ENCODE measurements at regions of chr11 and their contacts with region 1.

Region 1: DNA sequence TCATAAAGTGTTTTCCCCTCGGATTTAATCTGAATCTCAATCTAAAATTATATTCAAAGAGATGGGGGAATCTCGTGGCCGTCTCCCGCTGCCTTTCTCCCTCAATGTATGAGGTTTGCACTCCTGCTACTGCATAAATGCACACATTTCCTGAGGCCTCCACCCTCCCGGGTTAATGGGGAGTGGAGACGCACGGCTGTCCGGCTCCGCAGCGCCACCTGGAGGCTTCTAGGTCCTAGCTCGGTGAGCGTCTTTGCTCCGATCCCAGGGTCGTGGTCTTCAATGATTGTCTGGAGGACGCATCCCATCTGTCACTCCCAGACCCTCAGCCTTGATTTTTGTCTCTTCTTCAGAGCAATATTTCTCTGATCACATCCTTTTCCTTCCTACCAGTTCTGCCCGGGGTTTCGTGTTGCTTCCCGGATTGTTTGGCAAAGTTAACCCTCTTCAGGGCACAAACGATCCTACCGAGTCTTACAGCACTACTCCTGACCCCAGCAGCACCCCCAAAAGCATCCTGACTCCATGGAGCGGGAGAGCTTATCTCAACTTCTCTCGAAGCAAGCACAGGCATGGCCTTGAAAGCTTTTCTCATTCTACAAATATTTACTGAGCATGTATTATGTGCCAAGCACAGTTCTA is at the start of gene LMO1:
- DNase-seq: peak; percentile 58
- H3K4me3 Mint-ChIP-seq: peak within 1 kb of the TSS; percentile 73
- H3K27ac Mint-ChIP-seq: peak within 1 kb of the TSS; percentile 24
- H3K4me1 Mint-ChIP-seq: peaks cover 9% of the 10 kb centered on the region
- H3K27me3 Mint-ChIP-seq: peaks cover 61% of the 10 kb centered on the region
- total RNA-seq, gene LMO1: not detected in 2 replicates

Region 2: DNA sequence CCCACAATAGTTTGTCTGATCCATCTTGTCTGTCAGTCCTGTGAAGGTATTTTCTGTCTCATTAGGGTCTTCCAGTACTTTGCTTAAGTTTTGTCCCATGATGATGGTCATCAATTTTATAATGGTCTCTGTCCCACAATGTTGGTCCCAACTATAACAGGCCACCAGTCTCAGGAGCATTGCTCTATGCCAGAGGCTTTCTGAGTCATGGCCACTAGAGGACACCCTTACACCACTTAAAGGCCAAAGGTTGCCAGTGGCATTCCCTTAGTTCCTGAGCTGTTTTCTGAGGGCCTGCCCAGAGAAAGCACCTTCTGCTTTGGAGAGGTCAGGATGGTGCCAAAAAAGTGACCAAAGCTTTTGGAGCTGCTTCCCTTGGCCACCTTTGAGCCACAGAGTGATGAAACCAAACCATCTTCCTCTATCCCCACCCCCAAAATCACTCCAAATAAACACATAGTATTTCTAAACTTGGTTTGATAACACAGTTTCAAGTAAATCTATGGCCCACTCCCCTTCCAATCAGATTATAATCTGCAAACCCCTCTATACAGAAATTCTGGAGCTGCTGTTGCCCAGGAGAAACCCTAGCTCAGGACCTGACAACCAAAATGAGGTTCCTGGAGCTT is 257.4 kb before region 1 on chr11:
- intact Hi-C with region 1: loop called (anchors 5 kb)
- DNase-seq: peak; percentile 14
- H3K4me3 Mint-ChIP-seq: no peak overlapping the region
- H3K27ac Mint-ChIP-seq: no peak overlapping the region
- H3K4me1 Mint-ChIP-seq: no peaks in the 10 kb centered on the region
- H3K27me3 Mint-ChIP-seq: no peaks in the 10 kb centered on the region

Region 3: GRCh38 chr11:8033305-8034105 is 230.4 kb before region 1 on chr11:
- intact Hi-C with region 1: no loop called
- DNase-seq: peak; percentile 28
- H3K4me3 Mint-ChIP-seq: no peak overlapping the region
- H3K27ac Mint-ChIP-seq: no peak overlapping the region
- H3K4me1 Mint-ChIP-seq: no peaks in the 10 kb centered on the region
- H3K27me3 Mint-ChIP-seq: peaks cover 22% of the 10 kb centered on the region

Region 4: DNA sequence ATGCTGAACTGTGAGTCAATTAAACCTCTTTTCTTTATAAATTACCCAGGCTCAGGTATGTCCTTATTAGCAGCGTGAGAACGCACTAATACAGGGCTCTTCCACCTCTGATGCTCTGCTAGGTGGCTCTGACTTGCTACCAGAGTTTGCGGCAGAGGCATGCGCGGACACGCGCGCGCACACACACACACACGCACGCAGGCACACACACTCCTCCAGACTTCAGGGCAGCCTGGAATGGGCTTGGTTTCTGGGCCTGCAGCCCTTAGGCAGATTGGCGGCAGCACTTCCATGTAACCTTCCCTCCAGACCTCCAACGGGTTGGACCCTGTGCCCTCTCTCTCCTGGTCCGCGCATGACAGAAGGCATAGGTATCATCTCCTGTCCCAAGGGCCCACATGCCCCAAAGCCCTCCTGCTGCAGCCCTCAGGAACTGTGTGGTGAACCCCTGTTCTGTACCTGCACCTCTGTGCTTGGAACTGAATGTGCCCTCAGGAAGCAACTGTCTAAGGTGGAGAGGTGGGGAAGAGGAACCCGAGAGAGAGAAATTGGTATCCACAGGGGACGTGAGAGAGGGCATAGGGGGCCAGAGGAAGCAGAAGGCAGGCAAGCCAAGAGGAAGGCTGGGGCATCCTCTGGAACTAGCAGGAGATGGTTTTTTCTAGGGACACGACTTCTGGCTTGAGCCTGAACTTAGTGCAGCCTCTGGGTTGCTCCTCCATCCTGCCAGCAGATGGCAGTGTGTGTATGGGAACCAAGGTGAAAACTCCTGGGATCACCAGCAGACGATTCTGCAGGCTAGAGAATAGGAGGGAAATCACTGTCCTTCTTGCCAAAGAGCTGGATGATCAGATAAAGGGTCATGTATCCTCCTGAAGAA is 71.6 kb before region 1 on chr11:
- intact Hi-C with region 1: loop called (anchors 1 kb)
- DNase-seq: no peak
- H3K4me3 Mint-ChIP-seq: no peak overlapping the region
- H3K27ac Mint-ChIP-seq: no peak overlapping the region
- H3K4me1 Mint-ChIP-seq: no peaks in the 10 kb centered on the region
- H3K27me3 Mint-ChIP-seq: peaks cover 8% of the 10 kb centered on the region

Region 5: GRCh38 chr11:8225589-8226036 is 38.3 kb before region 1 on chr11:
- intact Hi-C with region 1: loop called (anchors 1 kb)
- DNase-seq: peak; percentile 40
- H3K4me3 Mint-ChIP-seq: no peak overlapping the region
- H3K27ac Mint-ChIP-seq: peak overlapping the region; percentile 47
- H3K4me1 Mint-ChIP-seq: peaks cover 16% of the 10 kb centered on the region
- H3K27me3 Mint-ChIP-seq: peaks cover 12% of the 10 kb centered on the region

Region 6: DNA sequence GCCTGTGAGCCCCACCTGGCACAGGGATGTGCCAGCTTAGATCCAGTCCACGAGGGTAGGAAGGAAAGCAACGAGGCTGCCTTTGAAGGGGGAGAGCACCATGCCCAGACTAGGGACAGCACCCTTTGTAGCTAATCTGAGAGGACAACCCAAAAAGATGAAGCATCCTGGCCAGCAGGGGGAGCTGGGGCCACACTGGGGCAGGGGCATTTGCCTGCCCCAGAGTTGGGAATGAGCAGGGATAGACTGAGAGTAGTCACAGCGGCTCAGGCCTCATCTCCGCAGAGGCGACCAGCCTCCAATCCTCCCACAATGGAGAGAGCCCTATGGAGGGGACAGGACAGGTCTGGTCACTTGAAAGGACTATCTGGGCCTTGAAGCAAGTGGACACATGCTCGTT is 16.6 kb before region 1 on chr11:
- intact Hi-C with region 1: loop called (anchors 1 kb)
- DNase-seq: no peak
- H3K4me3 Mint-ChIP-seq: no peak overlapping the region
- H3K27ac Mint-ChIP-seq: no peak overlapping the region
- H3K4me1 Mint-ChIP-seq: no peaks in the 10 kb centered on the region
- H3K27me3 Mint-ChIP-seq: peaks cover 18% of the 10 kb centered on the region

Measured in activated T-helper 1 cell treated with anti-CD3 and anti-CD28 coated beads, Interleukin-12 subunit alpha, Interleukin-12 subunit beta, Interleukin-2, Interleukin-4 antibody, amounts not matched to agents 30 ng/mL and 10 ng/mL and 1 ng/mL, durations not matched to agents 14 hours and 24 hours and 36 hours (primary cell).